HEK293 (cell line): ENCODE measurements at regions of chr1 and their contacts with region 1.

Region 1: DNA sequence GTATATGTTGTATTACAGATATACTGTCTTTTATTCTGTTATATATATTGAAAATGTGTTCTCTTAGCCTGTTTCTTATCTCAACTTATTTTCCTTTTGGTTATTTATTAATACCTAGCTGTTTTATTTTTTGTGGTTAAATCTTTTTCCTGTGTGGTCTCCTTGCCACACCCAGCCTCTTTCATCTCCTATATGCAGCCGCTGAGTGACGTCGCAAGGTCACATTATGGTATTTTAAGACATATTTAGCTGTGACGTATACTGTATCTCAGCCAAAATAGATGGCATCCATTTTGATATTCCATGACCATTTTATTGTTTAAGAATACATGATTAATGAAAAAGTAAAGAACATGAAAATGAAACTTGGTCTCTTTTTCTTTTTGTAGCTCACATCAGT is 29.1 kb downstream of the CENPF start:
- H3K4me3 ChIP-seq: no peak overlapping the region
- H3K27ac ChIP-seq: no peak overlapping the region
- H3K4me1 ChIP-seq: no peaks in the 10 kb centered on the region
- CTCF ChIP-seq: no peak

Region 2: GRCh38 chr1:214617843-214618242 is 14.2 kb before region 1 on chr1:
- CTCF ChIA-PET with region 1: interaction called, 17 read pairs
- POLR2A ChIA-PET with region 1: no interaction called
- H3K4me3 ChIP-seq: no peak overlapping the region
- H3K27ac ChIP-seq: no peak overlapping the region
- H3K4me1 ChIP-seq: no peaks in the 10 kb centered on the region
- CTCF ChIP-seq: no peak

Region 3: GRCh38 chr1:214648801-214649200 is 16.7 kb after region 1 on chr1:
- CTCF ChIA-PET with region 1: interaction called, 11 read pairs
- POLR2A ChIA-PET with region 1: no interaction called
- H3K4me3 ChIP-seq: no peak overlapping the region
- H3K27ac ChIP-seq: no peak overlapping the region
- H3K4me1 ChIP-seq: no peaks in the 10 kb centered on the region
- CTCF ChIP-seq: no peak